HEK293 (cell line): ENCODE measurements at regions of chrX and their contacts with region 1.

Region 1: GRCh38 chrX:155105919-155106318 is 34.6 kb downstream of the BRCC3 start:
- H3K4me3 ChIP-seq: no peak overlapping the region
- H3K27ac ChIP-seq: no peak overlapping the region
- H3K4me1 ChIP-seq: no peaks in the 10 kb centered on the region
- CTCF ChIP-seq: no peak

Region 2: GRCh38 chrX:155094468-155095061 is 11.4 kb before region 1 on chrX:
- CTCF ChIA-PET with region 1: interaction called, 27 read pairs
- POLR2A ChIA-PET with region 1: no interaction called
- H3K4me3 ChIP-seq: no peak overlapping the region
- H3K27ac ChIP-seq: no peak overlapping the region
- H3K4me1 ChIP-seq: no peaks in the 10 kb centered on the region
- CTCF ChIP-seq: no peak